Endothelial cell of umbilical vein (primary cell): ENCODE measurements at regions of chr14 and their contacts with region 1.

Region 1: DNA sequence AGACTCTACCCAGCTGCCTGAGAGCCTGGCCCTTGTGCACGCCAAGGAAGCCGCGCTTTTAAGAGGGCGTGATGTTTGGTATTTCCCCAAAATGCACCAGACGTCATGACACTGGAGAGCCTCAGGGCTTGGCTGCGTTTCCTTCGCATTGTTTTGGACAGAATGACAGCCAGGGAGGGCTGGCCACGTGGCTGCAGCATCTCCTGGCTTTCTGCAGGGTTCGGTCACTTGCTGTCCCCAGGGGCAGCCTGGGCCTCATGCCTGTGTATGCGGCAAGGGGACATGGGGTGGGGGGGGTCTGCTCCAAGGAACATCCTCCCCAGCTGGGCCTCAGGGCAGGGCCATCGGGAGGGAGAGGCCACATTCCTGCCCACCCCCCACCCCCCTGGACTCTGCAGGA is 16.2 kb upstream of the NUDT14 start:
- DNase-seq: no peak
- H3K4me3 ChIP-seq: no peak overlapping the region
- H3K27ac ChIP-seq: peak overlapping the region; percentile 87
- H3K4me1 ChIP-seq: peaks cover 72% of the 10 kb centered on the region
- H3K27me3 ChIP-seq: no peaks in the 10 kb centered on the region
- CTCF ChIP-seq: no peak
- POLR2A ChIP-seq: no peak

Region 2: DNA sequence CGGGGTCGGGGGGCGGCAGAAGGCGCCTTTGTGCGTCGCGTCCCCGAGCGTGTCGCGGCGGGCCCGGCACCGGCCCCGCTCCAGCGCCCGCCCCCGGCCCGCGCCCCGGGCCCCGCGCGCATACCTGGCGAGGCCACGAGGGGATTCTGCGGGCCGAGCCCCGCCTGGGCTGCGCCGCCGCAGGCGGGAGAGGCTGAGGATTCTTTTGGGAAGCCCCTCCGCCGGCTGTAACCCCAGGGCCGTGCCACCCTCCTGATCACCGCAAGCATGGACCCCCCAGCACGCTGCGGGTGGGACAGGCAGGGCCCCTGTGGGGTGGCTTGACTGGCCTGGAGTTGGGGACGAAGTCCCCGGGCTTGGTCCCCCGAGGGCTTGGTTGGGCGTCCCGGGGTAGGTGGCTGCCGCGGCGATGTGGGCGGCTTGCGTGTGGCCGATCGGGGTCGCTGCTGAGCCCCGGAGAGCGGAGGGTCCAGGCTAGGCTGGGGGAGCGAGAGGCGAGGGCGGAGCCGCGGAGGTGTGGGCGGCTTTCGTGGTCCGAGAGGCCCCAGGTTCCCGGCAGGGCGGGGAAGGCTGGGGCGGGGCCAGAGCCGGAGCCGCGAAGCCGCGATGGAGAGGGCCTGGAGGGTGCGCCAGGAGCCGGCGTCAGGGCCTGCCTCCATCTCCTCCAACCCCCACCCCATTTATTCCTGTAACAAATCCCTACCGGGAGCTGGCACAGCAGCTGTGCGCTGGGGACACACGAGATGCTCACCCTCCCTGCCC is 103.7 kb before region 1 on chr14:
- CTCF ChIA-PET with region 1: interaction called, 23 read pairs
- POLR2A ChIA-PET with region 1: no interaction called
- dilution Hi-C with region 1: no loop called
- intact Hi-C with region 1: loop called (anchors 1 kb)
- DNase-seq: peak; percentile 68
- H3K4me3 ChIP-seq: peak overlapping the region; percentile 43 to 61 (median 59)
- H3K27ac ChIP-seq: peak overlapping the region; percentile 26
- H3K4me1 ChIP-seq: peaks cover 11% of the 10 kb centered on the region
- H3K27me3 ChIP-seq: no peaks in the 10 kb centered on the region
- CTCF ChIP-seq: peak; percentile 48 to 82
- POLR2A ChIP-seq: no peak

Region 3: DNA sequence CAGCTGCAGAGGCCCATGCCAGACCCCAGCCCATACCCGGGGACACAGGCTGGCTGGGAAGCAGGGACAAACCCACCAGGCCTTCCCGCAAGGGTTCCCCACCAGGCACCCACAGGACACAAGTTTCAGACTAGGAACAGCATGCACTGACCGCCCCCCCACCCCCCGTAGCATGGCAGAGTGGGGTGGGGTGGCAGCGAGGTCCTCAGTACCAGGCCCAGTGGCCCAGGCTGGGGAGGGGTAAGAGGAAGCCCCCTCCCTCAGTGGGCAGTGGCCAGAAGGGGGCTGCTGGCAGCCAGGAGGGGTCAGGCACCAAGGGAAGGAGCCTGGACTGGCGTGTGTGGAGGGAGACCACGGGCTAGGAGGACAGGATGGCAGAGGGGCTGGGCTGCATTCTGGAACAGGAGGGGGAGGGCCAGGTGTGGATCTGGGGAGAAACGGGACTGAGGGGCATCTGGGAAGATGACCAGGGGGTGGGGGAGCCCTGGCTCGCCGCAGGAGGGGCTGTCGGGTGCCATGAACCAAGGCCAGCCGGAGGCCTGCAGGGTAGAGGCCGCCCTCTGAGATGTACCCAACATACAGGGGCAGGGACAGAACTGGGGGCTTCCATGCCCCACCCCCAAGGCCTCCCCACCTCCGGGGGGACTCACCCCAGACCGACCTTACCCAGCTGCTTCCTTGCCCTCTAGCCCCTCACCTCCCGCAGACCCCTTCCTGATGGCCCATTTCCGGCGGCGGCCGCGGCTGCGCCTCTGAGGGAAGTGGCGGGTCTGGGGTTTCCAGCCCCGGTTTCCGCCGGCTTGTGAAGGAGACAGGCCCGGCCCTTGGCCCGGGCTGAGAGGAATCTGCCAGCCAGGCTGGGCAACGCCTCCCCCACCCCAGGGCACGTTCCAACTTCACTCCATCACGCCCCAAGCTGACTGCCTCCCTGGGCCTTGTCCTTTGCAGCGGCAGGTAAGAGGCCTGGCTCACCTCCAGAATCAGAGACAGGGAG is 23.1 kb before region 1 on chr14:
- CTCF ChIA-PET with region 1: interaction called, 94 read pairs
- POLR2A ChIA-PET with region 1: interaction called, 4 read pairs
- dilution Hi-C with region 1: no loop called
- intact Hi-C with region 1: loop called (anchors 1 kb)
- DNase-seq: peak; percentile 66
- H3K4me3 ChIP-seq: no peak overlapping the region
- H3K27ac ChIP-seq: peak overlapping the region; percentile 76
- H3K4me1 ChIP-seq: peaks cover 57% of the 10 kb centered on the region
- H3K27me3 ChIP-seq: no peaks in the 10 kb centered on the region
- CTCF ChIP-seq: no peak
- POLR2A ChIP-seq: peak; percentile 58

Region 4: DNA sequence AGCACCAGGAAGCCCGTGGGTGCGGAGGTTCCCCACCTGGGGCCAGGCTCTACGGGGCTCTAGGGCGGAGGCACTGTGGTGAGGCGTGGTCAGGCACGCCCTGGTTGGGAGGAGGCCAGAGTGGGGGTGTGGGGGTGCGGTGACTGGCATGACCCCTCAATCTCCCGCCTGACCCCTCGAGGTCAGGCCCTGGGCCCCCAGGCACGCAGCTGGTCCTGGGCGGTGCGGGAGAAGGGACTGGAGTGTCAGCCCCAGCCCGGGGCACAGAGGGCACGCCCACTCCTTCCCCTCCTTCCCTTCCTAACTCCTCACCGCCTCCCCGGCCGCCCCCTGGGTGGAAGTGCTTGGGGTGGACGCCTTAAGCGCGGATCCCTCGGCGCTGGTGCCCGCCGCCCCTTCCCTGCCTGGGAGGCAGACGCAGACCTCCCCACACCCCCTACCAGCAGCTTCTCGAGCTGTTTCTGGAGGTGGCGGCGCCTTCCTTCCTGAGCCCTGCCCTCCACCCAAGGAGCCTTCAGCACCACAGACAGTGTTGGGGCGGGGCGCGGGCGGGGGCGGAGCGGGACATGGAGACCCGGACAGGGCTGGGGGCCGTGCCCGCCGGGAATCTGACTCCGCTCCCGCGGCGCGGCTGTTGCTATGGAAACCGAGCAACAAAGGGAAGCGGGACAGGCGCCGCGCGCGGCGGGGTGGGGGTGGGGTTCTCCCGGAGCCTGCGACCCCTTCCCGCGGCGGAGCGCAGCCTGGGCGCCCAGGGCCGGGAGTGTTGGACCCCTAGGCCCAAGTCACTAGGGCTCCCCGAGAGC is 276.6 kb after region 1 on chr14:
- CTCF ChIA-PET with region 1: no interaction called
- POLR2A ChIA-PET with region 1: no interaction called
- dilution Hi-C with region 1: no loop called
- intact Hi-C with region 1: loop called (anchors 2 kb)
- DNase-seq: peak; percentile 91
- H3K4me3 ChIP-seq: peak overlapping the region; percentile 21 to 93 (median 34)
- H3K27ac ChIP-seq: peak overlapping the region; percentile 90
- H3K4me1 ChIP-seq: peaks cover 19% of the 10 kb centered on the region
- H3K27me3 ChIP-seq: no peaks in the 10 kb centered on the region
- CTCF ChIP-seq: no peak
- POLR2A ChIP-seq: no peak